Dorsolateral prefrontal cortex (tissue), 120 donors: ENCODE measurements at regions of chr14 and their contacts with region 1.

Region 1: GRCh38 chr14:23095196-23096108 is at the start of gene C14orf119:
- DNase-seq: peak in 8 of 10 donors; percentile 99 to 100 (median 99)
- H3K4me3 ChIP-seq: peak within 1 kb of the TSS; percentile 66 to 99 (median 87)
- H3K27ac ChIP-seq: peak within 1 kb of the TSS; percentile 95 to 100 (median 99)
- H3K27me3 ChIP-seq: no peaks in the 10 kb centered on the region
- CTCF ChIP-seq: peak in 11 of 56 donors; percentile 4 to 55 (median 14)
- total RNA-seq, gene C14orf119: 7.9 to 32.3 (median 22.8) TPM

Region 2: GRCh38 chr14:23034483-23035302 is 60.8 kb before region 1 on chr14 and contains the start of gene PSMB5:
- intact Hi-C with region 1: loop called in 1 of 2 experiments (anchors 2 kb)
- DNase-seq: peak; percentile 80 to 94 (median 90)
- H3K4me3 ChIP-seq: peak within 1 kb of the TSS; percentile 68 to 100 (median 91)
- H3K27ac ChIP-seq: peak within 1 kb of the TSS; percentile 87 to 100 (median 98)
- H3K27me3 ChIP-seq: no peaks in the 10 kb centered on the region
- CTCF ChIP-seq: peak in 27 of 56 donors; percentile 1 to 54 (median 23)
- total RNA-seq, gene PSMB5: 63.4 to 136 (median 100) TPM

Region 3: DNA sequence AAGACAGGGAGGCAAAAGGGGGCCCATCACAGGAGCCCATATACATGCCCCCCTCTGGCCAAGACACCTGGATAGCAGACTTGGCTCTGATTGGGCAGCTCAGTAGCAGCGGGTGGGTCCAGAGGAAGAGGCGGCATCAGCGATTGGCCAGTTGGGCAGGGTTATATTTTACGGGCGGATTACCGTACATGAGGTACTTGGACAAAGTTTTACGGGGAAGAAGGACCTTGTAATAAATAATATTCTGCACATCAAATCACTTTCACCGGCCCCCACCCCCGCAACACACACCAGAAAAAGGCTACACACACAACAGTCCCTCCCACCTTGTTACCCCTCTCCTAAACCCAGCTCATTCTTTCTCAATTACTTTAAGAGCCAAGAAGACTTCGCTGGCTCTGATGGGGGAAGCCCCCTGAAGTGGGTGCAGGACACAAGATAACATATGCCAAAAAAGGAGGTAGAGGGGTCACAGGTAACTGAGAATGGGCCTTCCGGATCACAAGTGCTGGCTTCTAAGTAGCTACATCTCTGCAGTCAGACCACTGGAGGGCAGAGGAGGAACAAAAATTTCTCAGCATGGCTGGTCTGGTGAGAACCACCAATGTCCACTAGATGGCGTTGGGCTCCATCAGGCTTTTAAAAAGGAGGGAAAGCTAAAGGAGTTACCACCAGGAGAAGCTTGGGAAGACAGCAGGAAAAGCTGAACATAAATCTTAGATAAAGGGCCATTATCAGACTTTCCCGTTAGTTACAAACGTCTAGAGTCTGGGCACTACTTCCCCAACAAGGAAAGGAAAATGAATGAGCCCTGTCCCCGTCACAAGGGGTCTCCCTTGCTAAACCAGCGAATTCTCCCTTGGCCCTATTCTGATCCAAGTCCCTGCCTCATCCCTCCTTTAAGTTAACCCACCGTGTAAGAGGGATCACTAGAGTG is 26.7 kb before region 1 on chr14:
- intact Hi-C with region 1: loop called in 1 of 2 experiments (anchors 2 kb)
- DNase-seq: peak in 8 of 10 donors; percentile 72 to 86 (median 79)
- H3K4me3 ChIP-seq: peak overlapping the region in 31 of 59 donors; percentile 1 to 46 (median 16)
- H3K27ac ChIP-seq: peak overlapping the region in 31 of 59 donors; percentile 4 to 93 (median 46)
- H3K27me3 ChIP-seq: no peaks in the 10 kb centered on the region
- CTCF ChIP-seq: peak; percentile 93 to 100 (median 98)